Activated CD4-positive, alpha-beta memory T cell treated with anti-CD3 and anti-CD28 coated beads, Interleukin-2, amount 10 ng/mL, durations not matched to agents 7 days and 5 days (primary cell): ENCODE measurements at regions of chr7 and their contacts with region 1.

Region 1: GRCh38 chr7:106166655-106167342 is 54.7 kb upstream of the SYPL1 start:
- DNase-seq: peak; percentile 28
- H3K4me3 Mint-ChIP-seq: no peak overlapping the region
- H3K27ac Mint-ChIP-seq: no peak overlapping the region
- H3K4me1 Mint-ChIP-seq: no peaks in the 10 kb centered on the region
- H3K27me3 Mint-ChIP-seq: peaks cover 20% of the 10 kb centered on the region

Region 2: GRCh38 chr7:106009403-106010226 is 157.2 kb before region 1 on chr7:
- CTCF ChIA-PET with region 1: no interaction called
- POLR2A ChIA-PET with region 1: no interaction called
- DNase-seq: peak; percentile 83
- H3K4me3 Mint-ChIP-seq: no peak overlapping the region
- H3K27ac Mint-ChIP-seq: no peak overlapping the region
- H3K4me1 Mint-ChIP-seq: peaks cover 12% of the 10 kb centered on the region
- H3K27me3 Mint-ChIP-seq: peaks cover 33% of the 10 kb centered on the region

Region 3: GRCh38 chr7:106056513-106057203 is 110.1 kb before region 1 on chr7:
- CTCF ChIA-PET with region 1: interaction called, 49 read pairs
- POLR2A ChIA-PET with region 1: no interaction called
- DNase-seq: peak; percentile 76
- H3K4me3 Mint-ChIP-seq: no peak overlapping the region
- H3K27ac Mint-ChIP-seq: no peak overlapping the region
- H3K4me1 Mint-ChIP-seq: peaks cover 30% of the 10 kb centered on the region
- H3K27me3 Mint-ChIP-seq: peaks cover 9% of the 10 kb centered on the region